Activated CD8-positive, alpha-beta T cell treated with anti-CD3 and anti-CD28 coated beads for 36 hours (primary cell): ENCODE measurements at regions of chr6 and their contacts with region 1.

Region 1: DNA sequence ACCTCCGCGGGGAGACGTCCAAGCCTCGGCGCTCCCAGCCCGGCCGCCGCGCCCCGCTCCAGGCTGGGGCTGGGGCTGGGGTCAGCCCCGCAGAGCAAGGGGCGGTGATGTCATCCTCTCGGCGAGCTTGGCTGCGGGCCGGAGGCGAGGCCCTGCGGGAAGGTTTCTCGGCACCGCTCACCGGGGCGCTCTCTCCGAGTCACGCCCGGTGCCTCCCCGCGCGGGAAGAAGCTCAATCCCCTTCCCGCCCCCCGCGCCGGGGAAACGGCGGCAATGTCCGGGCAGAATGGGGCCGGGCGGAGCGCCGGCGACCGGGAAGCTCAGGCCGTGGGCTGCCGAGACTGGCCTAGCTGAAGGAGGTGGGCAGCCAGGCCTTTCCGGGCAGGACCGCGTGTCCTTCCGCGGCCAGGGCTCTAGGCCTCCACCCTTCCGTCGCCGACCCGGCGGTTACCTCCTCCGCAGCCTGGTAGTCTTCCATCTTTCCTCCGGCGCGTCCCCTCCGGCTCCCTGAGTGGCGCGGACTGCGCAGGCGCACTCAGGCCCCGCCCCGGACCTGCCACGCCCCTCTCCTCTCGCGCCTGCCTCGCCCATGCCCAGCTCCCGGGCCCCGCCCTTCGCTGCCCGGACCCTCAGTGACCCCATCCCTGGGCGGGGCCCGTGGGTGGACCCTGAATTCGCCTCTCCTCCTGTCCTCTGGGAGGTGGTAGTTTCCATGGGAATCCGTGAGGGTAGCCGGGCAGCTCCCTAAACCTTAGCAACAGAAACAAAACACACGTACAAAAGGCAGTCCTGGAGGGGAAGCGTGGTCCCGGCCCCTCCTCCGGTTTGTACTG is at the start of gene DYNLT1:
- DNase-seq: peak; percentile 91
- ATAC-seq: peak; percentile 59
- H3K4me3 Mint-ChIP-seq: peak within 1 kb of the TSS; percentile 99
- H3K27ac Mint-ChIP-seq: peak within 1 kb of the TSS; percentile 97
- H3K4me1 Mint-ChIP-seq: peaks cover 71% of the 10 kb centered on the region
- H3K27me3 Mint-ChIP-seq: no peaks in the 10 kb centered on the region
- CTCF ChIP-seq: no peak
- total RNA-seq, gene DYNLT1: 94.3 to 98.3 TPM

Region 2: GRCh38 chr6:158631678-158632537 is 12.5 kb before region 1 on chr6:
- CTCF ChIA-PET with region 1: no interaction called
- POLR2A ChIA-PET with region 1: interaction called, 112 read pairs
- intact Hi-C with region 1: no loop called
- DNase-seq: no peak
- ATAC-seq: no peak
- H3K4me3 Mint-ChIP-seq: no peak overlapping the region
- H3K27ac Mint-ChIP-seq: peak overlapping the region; percentile 77
- H3K4me1 Mint-ChIP-seq: peaks cover 50% of the 10 kb centered on the region
- H3K27me3 Mint-ChIP-seq: no peaks in the 10 kb centered on the region
- CTCF ChIP-seq: no peak

Region 3: GRCh38 chr6:158660333-158660754 is 15.9 kb after region 1 on chr6:
- CTCF ChIA-PET with region 1: interaction called, 21 read pairs
- POLR2A ChIA-PET with region 1: interaction called, 112 read pairs
- intact Hi-C with region 1: no loop called
- DNase-seq: peak; percentile 58
- ATAC-seq: peak; percentile 69
- H3K4me3 Mint-ChIP-seq: no peak overlapping the region
- H3K27ac Mint-ChIP-seq: peak overlapping the region; percentile 11
- H3K4me1 Mint-ChIP-seq: peaks cover 54% of the 10 kb centered on the region
- H3K27me3 Mint-ChIP-seq: no peaks in the 10 kb centered on the region
- CTCF ChIP-seq: peak; percentile 74

Region 4: DNA sequence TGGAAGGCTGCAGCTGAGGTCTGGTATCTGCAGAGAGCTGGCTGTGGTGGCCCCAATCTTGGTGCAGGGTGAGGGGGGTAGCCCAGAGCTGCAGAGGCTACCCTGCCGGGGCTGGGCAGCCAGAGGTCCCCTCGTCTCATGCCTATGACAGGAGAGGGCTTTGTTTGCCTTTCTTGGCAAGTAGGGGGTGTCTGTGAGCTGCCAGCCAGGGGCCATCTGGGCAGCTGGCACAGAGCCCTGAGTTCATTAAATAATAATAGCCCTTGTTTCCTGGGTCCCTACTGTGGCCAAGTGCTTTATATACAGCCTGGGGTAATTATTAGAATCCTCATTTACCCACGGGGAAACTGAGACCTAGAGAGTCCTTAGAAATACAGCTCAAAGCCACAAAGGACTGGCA is 108.2 kb after region 1 on chr6:
- CTCF ChIA-PET with region 1: no interaction called
- POLR2A ChIA-PET with region 1: no interaction called
- intact Hi-C with region 1: no loop called
- DNase-seq: no peak
- ATAC-seq: no peak
- H3K4me3 Mint-ChIP-seq: no peak overlapping the region
- H3K27ac Mint-ChIP-seq: no peak overlapping the region
- H3K4me1 Mint-ChIP-seq: no peaks in the 10 kb centered on the region
- H3K27me3 Mint-ChIP-seq: no peaks in the 10 kb centered on the region
- CTCF ChIP-seq: no peak